Activated CD8-positive, alpha-beta T cell treated with anti-CD3 and anti-CD28 coated beads for 36 hours (primary cell): ENCODE measurements at regions of chr2 and their contacts with region 1.

Region 1: GRCh38 chr2:72150157-72150865 is 2.6 kb upstream of the CYP26B1 start:
- DNase-seq: peak; percentile 74
- ATAC-seq: peak; percentile 86
- H3K4me3 Mint-ChIP-seq: peak overlapping the region; percentile 53
- H3K27ac Mint-ChIP-seq: no peak overlapping the region
- H3K4me1 Mint-ChIP-seq: peaks cover 32% of the 10 kb centered on the region
- H3K27me3 Mint-ChIP-seq: peaks cover 56% of the 10 kb centered on the region
- CTCF ChIP-seq: peak; percentile 80

Region 2: GRCh38 chr2:72118951-72119350 is 31.4 kb before region 1 on chr2:
- CTCF ChIA-PET with region 1: no interaction called
- POLR2A ChIA-PET with region 1: no interaction called
- intact Hi-C with region 1: no loop called
- DNase-seq: no peak
- ATAC-seq: no peak
- H3K4me3 Mint-ChIP-seq: no peak overlapping the region
- H3K27ac Mint-ChIP-seq: no peak overlapping the region
- H3K4me1 Mint-ChIP-seq: no peaks in the 10 kb centered on the region
- H3K27me3 Mint-ChIP-seq: peaks cover 11% of the 10 kb centered on the region
- CTCF ChIP-seq: no peak

Region 3: DNA sequence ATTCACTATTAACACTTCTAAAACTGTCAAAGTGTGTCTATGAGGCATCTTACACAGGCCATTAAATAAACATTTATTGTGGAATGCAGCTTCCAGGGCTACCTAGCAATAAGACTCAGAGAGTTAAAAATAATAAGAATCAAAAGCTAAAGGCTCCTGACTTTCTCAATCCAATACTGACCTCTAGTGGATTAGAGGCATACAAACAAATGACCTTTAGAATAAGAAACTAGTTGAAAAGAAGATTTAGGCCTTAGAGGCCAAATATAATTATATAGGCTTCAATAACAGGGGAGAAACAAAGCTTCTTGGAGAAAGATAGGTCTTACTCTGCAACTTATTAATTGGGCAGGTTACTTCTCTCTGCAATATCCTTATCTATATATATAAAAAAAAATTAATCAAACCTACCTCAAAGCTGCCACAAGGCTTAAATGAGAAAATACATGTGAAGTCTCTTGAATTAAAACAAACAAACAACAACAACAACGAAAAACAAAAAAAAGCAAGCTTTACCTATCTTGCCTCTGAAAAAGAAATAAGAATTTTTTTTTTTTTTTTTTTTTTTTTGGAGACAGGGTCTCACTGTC is 429.4 kb after region 1 on chr2:
- CTCF ChIA-PET with region 1: interaction called, 8 read pairs
- POLR2A ChIA-PET with region 1: no interaction called
- intact Hi-C with region 1: loop called (anchors 5 kb)
- DNase-seq: no peak
- ATAC-seq: no peak
- H3K4me3 Mint-ChIP-seq: no peak overlapping the region
- H3K27ac Mint-ChIP-seq: no peak overlapping the region
- H3K4me1 Mint-ChIP-seq: no peaks in the 10 kb centered on the region
- H3K27me3 Mint-ChIP-seq: no peaks in the 10 kb centered on the region
- CTCF ChIP-seq: peak; percentile 65